GM12878 (cell line): ENCODE measurements at regions of chr17 and their contacts with region 1.

Region 1: DNA sequence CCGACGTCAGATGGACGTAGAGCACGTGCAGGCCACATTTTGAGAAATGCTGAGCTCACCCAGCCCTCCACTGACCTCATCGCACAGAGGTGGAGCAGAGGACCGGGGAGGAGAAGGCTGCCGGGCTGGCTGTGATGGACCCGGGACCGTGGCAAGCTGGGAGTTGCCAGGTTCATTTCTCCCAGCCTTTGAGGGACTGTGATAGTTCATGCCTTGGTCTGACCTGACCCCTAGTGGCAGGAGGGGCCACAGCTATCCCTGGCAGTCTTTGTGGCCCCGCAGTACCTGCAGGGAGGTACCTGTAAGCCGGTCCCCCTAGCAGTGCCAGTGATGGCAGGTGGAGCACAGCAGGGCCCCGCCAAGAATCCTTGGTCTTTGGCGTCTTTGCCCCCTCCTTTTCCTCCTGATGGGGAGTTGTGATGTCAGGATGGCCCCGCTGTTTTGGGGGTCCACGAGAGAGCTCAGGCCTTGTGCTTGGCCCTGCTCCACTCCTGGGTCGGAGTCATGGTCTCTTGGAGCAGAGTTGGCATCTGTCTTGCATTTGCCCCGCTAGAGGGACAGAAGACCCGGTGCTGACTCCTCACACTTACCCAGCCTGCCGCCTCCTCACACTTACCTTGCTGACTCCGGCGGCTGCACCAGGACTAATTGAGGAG is 50.4 kb downstream of the OR1D5 start:
- DNase-seq: peak; percentile 16
- ATAC-seq: peak; percentile 98
- H3K4me3 ChIP-seq: no peak overlapping the region
- H3K27ac ChIP-seq: no peak overlapping the region
- H3K4me1 ChIP-seq: no peaks in the 10 kb centered on the region
- H3K27me3 ChIP-seq: no peaks in the 10 kb centered on the region; a peak in 1 of 4 replicates
- CTCF ChIP-seq: peak; percentile 90 to 91 (median 91)
- EP300 ChIP-seq: no peak
- POLR2A ChIP-seq: no peak
- RAD21 ChIP-seq: peak; percentile 93

Region 2: DNA sequence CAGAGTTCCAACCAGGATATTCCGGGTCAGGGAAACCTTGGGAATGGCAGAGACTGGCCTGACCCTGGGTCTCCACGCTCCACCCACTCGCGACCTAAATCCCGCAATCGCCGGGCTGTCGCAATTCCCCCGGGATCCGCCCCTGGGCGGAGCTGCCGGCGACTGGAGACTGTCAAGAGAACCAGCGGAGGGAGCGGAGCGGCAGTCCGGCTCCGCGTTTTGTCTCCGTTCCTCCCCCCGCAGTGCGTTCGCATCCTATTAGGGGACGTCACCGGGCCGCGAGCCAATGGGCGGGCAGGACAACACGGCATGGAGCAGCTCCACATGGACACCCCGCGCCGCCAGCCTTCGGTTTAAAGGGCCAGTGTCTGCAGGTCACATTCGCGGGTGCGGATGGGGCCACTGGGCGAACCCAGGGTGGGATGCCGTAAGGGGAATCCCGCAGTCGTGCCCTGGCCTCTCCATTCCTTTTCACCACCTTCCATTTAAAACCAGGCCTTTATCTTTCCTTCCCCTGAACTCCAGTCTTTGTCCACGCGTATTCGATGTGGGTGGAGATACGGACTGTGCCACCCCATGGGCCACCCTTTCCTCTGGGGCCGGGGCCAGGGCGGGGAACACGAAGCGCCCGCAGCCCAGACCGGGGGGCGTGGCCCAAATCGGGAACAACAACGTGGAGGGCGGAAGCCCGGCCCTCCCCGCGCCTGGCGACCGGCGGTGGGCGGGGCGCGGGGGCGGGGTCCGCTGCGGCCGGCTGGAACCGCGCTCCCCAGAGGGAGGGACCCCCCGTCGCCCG is 611.4 kb before region 1 on chr17:
- CTCF ChIA-PET with region 1: no interaction called
- POLR2A ChIA-PET with region 1: no interaction called
- RAD21 ChIA-PET with region 1: no interaction called
- SMC1A ChIA-PET with region 1: no interaction called
- in situ Hi-C with region 1: loop called (anchors 25 kb)
- intact Hi-C with region 1: no loop called
- DNase-seq: peak; percentile 96
- ATAC-seq: peak; percentile 72
- H3K4me3 ChIP-seq: peak overlapping the region; percentile 87
- H3K27ac ChIP-seq: peak overlapping the region; percentile 95
- H3K4me1 ChIP-seq: peaks cover 11% of the 10 kb centered on the region
- H3K27me3 ChIP-seq: no peaks in the 10 kb centered on the region
- CTCF ChIP-seq: no peak
- EP300 ChIP-seq: 0 out of 4 replicates have a peak, but pooled peaks of 1 of the 2 experiments have one; percentile 10
- POLR2A ChIP-seq: 0 out of 2 replicates have a peak, but pooled peaks have one; percentile 41
- RAD21 ChIP-seq: no peak

Region 3: GRCh38 chr17:2828397-2829038 is 184.5 kb before region 1 on chr17:
- CTCF ChIA-PET with region 1: interaction called, 6 read pairs
- POLR2A ChIA-PET with region 1: no interaction called
- RAD21 ChIA-PET with region 1: interaction called, 4 read pairs
- SMC1A ChIA-PET with region 1: interaction called, 3 read pairs
- in situ Hi-C with region 1: loop called (anchors 5 kb)
- intact Hi-C with region 1: loop called (anchors 1 kb)
- DNase-seq: no peak
- ATAC-seq: peak; percentile 96
- H3K4me3 ChIP-seq: no peak overlapping the region
- H3K27ac ChIP-seq: no peak overlapping the region
- H3K4me1 ChIP-seq: peaks cover 2% of the 10 kb centered on the region; the same call in 1 of the 2 replicates
- H3K27me3 ChIP-seq: no peaks in the 10 kb centered on the region; a peak in 1 of 4 replicates
- CTCF ChIP-seq: peak; percentile 87 to 94 (median 90)
- EP300 ChIP-seq: no peak
- POLR2A ChIP-seq: no peak
- RAD21 ChIP-seq: peak; percentile 82

Region 4: GRCh38 chr17:2847381-2848333 is 165.4 kb before region 1 on chr17:
- CTCF ChIA-PET with region 1: interaction called, 52 read pairs
- POLR2A ChIA-PET with region 1: no interaction called
- RAD21 ChIA-PET with region 1: interaction called, 27 read pairs
- SMC1A ChIA-PET with region 1: interaction called, 16 read pairs
- in situ Hi-C with region 1: no loop called
- intact Hi-C with region 1: loop called (anchors 1 kb)
- DNase-seq: no peak
- ATAC-seq: no peak
- H3K4me3 ChIP-seq: no peak overlapping the region
- H3K27ac ChIP-seq: no peak overlapping the region; the same call in 1 of the 2 replicates
- H3K4me1 ChIP-seq: peaks cover 7% of the 10 kb centered on the region
- H3K27me3 ChIP-seq: peaks cover 0 to 6% of the 10 kb centered on the region in 2 experiments; a peak in 3 of 4 replicates
- CTCF ChIP-seq: no peak
- EP300 ChIP-seq: no peak
- POLR2A ChIP-seq: no peak
- RAD21 ChIP-seq: no peak